ENCODE measurements at regions of chr1 and their contacts with region 1.

Region 1: DNA sequence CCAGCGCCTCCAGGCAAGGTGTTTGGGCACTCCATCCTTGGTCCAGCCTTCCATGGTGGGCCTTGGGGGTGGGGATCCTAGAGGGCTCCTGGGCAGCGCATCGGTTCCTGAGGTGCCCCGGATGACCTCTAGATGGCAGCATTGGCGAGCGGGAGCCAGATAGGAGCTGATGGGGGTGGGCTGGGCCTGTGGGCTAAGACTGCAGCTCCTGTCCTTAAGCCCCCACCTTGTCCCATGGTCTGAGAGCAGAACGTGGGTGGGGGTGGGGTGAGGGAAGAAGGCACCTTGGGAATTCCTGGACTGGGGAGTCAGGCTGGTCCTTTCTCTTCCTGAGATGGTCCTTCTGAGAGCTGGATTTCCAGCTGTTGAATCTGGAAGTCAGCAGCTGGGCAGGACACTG is 93.4 kb upstream of the CSF3R start:
- DNase-seq: peak; percentile 70
- ATAC-seq: peak; percentile 61
- H3K4me3 Mint-ChIP-seq: no peak overlapping the region
- H3K27ac Mint-ChIP-seq: no peak overlapping the region
- H3K4me1 Mint-ChIP-seq: no peaks in the 10 kb centered on the region
- H3K27me3 Mint-ChIP-seq: peaks cover 27% of the 10 kb centered on the region
- CTCF ChIP-seq: peak; percentile 88

Region 2: DNA sequence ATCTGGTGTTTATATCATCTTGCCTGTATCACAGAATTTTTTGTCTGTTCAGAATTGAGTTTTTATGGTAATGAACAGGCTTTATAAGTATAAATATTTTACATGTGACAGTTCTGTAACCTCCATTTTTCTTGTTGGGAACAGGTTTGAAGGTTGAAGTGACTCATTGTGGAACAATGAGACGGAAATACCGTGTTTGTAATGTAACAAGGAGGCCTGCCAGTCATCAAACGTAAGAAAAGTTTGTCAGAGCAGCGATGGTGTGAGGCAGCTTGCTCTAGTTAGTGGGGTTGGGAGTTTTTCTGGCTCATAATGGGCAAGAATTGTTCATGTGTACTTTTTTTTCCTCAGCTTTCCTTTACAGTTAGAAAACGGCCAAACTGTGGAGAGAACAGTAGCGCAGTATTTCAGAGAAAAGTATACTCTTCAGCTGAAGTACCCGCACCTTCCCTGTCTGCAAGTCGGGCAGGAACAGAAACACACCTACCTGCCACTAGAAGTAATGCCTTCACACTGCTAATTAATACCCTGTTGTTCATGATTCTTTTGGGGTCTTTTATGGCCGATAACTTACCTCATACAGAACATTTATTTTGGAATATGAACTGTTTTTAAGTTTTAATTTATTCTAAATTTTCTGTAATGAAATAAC is 567.4 kb before region 1 on chr1:
- CTCF ChIA-PET with region 1: no interaction called
- POLR2A ChIA-PET with region 1: no interaction called
- intact Hi-C with region 1: no loop called
- DNase-seq: peak; percentile 12
- ATAC-seq: peak; percentile 55
- H3K4me3 Mint-ChIP-seq: no peak overlapping the region
- H3K27ac Mint-ChIP-seq: peak overlapping the region; percentile 78
- H3K4me1 Mint-ChIP-seq: peaks cover 4% of the 10 kb centered on the region
- H3K27me3 Mint-ChIP-seq: no peaks in the 10 kb centered on the region
- CTCF ChIP-seq: no peak

Region 3: DNA sequence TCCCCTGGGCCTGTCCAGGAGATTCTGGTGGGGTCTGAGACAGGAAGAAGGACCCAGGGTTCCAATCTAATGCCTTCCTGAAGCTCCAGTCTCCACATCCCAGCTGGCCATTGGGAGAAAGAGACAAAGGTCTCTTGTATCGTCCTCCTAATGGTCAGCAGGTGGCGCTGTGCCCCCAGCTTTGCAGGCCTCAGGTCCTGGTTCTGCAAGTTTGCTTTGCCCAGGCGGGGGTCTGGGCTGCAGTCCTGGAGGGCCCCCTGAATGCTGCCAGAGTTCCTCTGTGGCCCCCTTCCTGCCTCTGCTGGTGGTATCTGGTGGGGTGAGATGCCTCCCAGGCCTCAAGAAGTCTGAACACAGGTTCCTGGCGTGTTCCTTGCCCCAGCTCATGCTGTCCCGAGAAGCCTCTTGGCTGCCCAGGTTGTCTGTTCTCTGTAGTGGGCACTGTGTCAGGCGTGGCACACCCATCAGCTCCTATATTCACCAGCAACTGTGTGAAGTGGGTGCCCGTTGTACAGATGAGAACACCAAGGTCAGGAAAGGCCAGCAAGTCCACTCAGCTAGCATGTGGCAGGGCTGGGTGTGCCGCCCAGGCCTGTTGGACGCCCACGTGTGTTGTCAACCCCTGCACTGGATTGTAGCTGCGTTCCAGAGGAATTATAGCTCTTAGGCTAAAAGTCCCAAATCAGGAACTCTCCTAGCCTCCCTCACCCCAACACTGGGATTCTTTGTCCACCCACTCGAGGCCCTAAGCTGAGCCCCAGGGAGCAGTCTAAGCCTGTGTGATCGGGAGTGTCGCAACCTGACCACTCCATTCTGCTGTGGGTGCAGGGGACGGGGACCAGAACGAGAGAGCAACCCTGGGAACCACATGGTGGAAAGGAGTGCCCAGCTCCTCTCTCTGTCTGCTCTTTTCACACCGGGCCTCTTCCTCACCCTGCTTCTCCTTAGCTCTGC is 59.5 kb before region 1 on chr1:
- CTCF ChIA-PET with region 1: interaction called, 16 read pairs
- POLR2A ChIA-PET with region 1: no interaction called
- intact Hi-C with region 1: no loop called
- DNase-seq: peak; percentile 66
- ATAC-seq: peak; percentile 72
- H3K4me3 Mint-ChIP-seq: no peak overlapping the region
- H3K27ac Mint-ChIP-seq: no peak overlapping the region
- H3K4me1 Mint-ChIP-seq: no peaks in the 10 kb centered on the region
- H3K27me3 Mint-ChIP-seq: no peaks in the 10 kb centered on the region
- CTCF ChIP-seq: peak; percentile 93

Region 4: DNA sequence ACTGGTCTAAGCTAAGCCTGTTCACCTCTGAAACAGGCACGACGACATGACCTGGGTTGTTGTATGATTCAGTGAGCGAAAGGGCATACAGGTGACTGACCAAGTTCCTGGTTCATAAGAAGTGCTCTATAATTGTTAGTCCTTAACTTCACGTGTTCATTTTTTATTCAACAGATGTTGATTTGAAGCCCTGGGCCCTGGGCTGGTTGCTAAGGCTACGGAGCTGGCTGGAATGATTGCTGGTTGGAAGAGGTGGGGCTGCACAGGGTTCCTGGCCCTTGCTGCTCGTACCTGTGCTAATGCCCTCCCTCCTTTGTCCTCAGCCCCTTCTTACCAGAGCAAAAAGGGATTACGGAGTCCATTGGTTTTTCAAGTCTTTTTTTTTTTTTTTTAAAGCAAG is 17.9 kb after region 1 on chr1:
- CTCF ChIA-PET with region 1: interaction called, 16 read pairs
- POLR2A ChIA-PET with region 1: no interaction called
- intact Hi-C with region 1: no loop called
- DNase-seq: no peak
- ATAC-seq: no peak
- H3K4me3 Mint-ChIP-seq: no peak overlapping the region
- H3K27ac Mint-ChIP-seq: no peak overlapping the region
- H3K4me1 Mint-ChIP-seq: no peaks in the 10 kb centered on the region
- H3K27me3 Mint-ChIP-seq: peaks cover 13% of the 10 kb centered on the region
- CTCF ChIP-seq: no peak

Region 5: GRCh38 chr1:36609241-36610027 is 33.3 kb after region 1 on chr1:
- CTCF ChIA-PET with region 1: interaction called, 14 read pairs
- POLR2A ChIA-PET with region 1: no interaction called
- intact Hi-C with region 1: no loop called
- DNase-seq: peak; percentile 65
- ATAC-seq: peak; percentile 74
- H3K4me3 Mint-ChIP-seq: no peak overlapping the region
- H3K27ac Mint-ChIP-seq: no peak overlapping the region
- H3K4me1 Mint-ChIP-seq: peaks cover 12% of the 10 kb centered on the region
- H3K27me3 Mint-ChIP-seq: peaks cover 3% of the 10 kb centered on the region
- CTCF ChIP-seq: peak; percentile 68

Region 6: DNA sequence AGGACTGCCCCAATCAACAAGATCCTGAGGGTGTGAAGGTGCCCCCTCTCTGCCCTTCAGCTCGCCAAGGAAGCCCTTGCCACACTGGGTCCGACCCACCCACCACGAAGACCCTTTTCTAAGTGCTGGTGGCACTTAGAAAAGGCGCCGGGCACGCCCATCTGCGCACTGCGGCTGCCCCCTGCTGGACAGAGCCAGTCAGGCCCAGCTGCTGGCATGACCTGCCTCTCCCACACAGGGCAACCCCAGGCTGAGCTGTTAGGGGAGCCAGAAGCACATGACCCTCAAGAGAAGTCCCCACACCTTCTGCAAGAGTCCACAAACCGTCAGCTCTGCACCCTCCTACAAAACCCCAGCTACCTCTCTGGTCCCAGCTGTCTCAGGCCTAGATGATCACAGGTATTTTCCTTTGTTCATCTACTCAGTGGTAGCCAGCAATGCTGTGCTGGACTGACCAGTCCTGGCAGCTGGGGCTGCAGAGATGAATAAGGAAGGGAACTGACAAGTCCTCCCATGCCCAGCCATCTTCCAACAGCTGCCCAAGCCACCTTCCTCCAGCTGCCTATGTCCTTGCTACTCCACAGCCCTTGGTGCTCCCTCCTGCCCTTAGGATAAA is 858.3 kb after region 1 on chr1:
- CTCF ChIA-PET with region 1: interaction called, 15 read pairs
- POLR2A ChIA-PET with region 1: no interaction called
- intact Hi-C with region 1: no loop called
- DNase-seq: peak; percentile 80
- ATAC-seq: peak; percentile 98
- H3K4me3 Mint-ChIP-seq: no peak overlapping the region
- H3K27ac Mint-ChIP-seq: no peak overlapping the region
- H3K4me1 Mint-ChIP-seq: no peaks in the 10 kb centered on the region
- H3K27me3 Mint-ChIP-seq: peaks cover 14% of the 10 kb centered on the region
- CTCF ChIP-seq: peak; percentile 89

Measured in activated CD8-positive, alpha-beta T cell treated with anti-CD3 and anti-CD28 coated beads for 36 hours (primary cell).